CD8-positive, alpha-beta T cell (primary cell): ENCODE measurements at regions of chr13 and their contacts with region 1.

Region 1: DNA sequence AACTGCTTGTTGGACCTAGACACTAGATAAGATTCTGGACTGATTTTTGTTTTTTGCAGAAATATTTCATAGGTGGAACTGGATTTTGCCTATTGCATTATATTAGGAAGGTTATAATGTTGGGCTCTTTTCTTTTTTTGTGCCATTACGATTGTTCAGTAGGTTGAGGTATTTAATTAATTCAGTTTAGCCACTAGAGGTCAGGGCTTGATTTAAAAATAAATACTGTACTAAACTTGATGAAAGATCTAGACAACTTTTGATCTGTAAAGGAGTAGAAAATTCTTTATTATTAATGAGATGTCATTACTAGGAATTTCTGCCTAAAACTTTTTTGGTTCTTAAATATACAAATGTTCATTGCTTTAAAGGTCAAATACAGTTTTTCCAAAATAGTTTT is 15.2 kb upstream of the SUPT20H start:
- DNase-seq: peak in 1 of 9 experiments; percentile 33
- ATAC-seq: no peak
- H3K4me3 ChIP-seq: no peak overlapping the region
- H3K4me3 Mint-ChIP-seq: no peak overlapping the region
- H3K27ac ChIP-seq: no peak overlapping the region
- H3K27ac Mint-ChIP-seq: no peak overlapping the region
- H3K4me1 ChIP-seq: no peaks in the 10 kb centered on the region
- H3K4me1 Mint-ChIP-seq: peaks cover 2% of the 10 kb centered on the region
- H3K27me3 ChIP-seq: no peaks in the 10 kb centered on the region
- H3K27me3 Mint-ChIP-seq: peaks cover 3% of the 10 kb centered on the region
- CTCF ChIP-seq: peak; percentile 49

Region 2: GRCh38 chr13:36766314-36766713 is 308.4 kb before region 1 on chr13:
- CTCF ChIA-PET with region 1: no interaction called
- POLR2A ChIA-PET with region 1: no interaction called
- intact Hi-C with region 1: no loop called
- DNase-seq: no peak
- ATAC-seq: no peak
- H3K4me3 ChIP-seq: no peak overlapping the region
- H3K4me3 Mint-ChIP-seq: no peak overlapping the region
- H3K27ac ChIP-seq: no peak overlapping the region
- H3K27ac Mint-ChIP-seq: no peak overlapping the region
- H3K4me1 ChIP-seq: no peaks in the 10 kb centered on the region
- H3K4me1 Mint-ChIP-seq: no peaks in the 10 kb centered on the region
- H3K27me3 ChIP-seq: no peaks in the 10 kb centered on the region
- H3K27me3 Mint-ChIP-seq: peaks cover 16% of the 10 kb centered on the region
- CTCF ChIP-seq: no peak

Region 3: DNA sequence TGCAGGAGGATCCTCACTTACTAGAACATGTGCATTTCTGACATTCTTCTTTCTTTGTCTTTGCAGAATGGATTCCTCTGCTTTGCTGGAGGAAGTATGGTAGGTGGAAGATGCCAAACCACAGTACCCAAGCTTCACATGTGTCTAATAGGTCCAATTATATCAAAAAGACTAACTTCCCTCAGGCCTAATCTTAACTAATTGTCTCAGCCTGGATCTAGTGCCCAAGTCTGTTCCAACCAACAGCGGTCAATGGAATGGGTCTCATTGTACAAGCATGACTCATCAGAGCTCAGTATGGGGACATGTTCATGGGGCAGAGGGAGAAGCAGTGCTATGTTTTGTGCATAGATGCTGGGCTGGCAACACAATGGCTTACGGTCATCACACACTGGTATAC is 112.4 kb after region 1 on chr13:
- CTCF ChIA-PET with region 1: no interaction called
- POLR2A ChIA-PET with region 1: no interaction called
- intact Hi-C with region 1: no loop called
- DNase-seq: no peak
- ATAC-seq: no peak
- H3K4me3 ChIP-seq: no peak overlapping the region
- H3K4me3 Mint-ChIP-seq: no peak overlapping the region
- H3K27ac ChIP-seq: no peak overlapping the region
- H3K27ac Mint-ChIP-seq: no peak overlapping the region
- H3K4me1 ChIP-seq: no peaks in the 10 kb centered on the region
- H3K4me1 Mint-ChIP-seq: no peaks in the 10 kb centered on the region
- H3K27me3 ChIP-seq: peaks cover 0 to 3% of the 10 kb centered on the region in 2 experiments
- H3K27me3 Mint-ChIP-seq: no peaks in the 10 kb centered on the region
- CTCF ChIP-seq: no peak

Region 4: GRCh38 chr13:38582133-38582532 is 1507.4 kb after region 1 on chr13:
- CTCF ChIA-PET with region 1: interaction called, 3 read pairs
- POLR2A ChIA-PET with region 1: no interaction called
- intact Hi-C with region 1: loop called (anchors 2 to 5 kb)
- DNase-seq: peak in 2 of 9 experiments; percentile 2 to 20
- ATAC-seq: no peak
- H3K4me3 ChIP-seq: no peak overlapping the region
- H3K4me3 Mint-ChIP-seq: no peak overlapping the region
- H3K27ac ChIP-seq: no peak overlapping the region
- H3K27ac Mint-ChIP-seq: no peak overlapping the region
- H3K4me1 ChIP-seq: no peaks in the 10 kb centered on the region
- H3K4me1 Mint-ChIP-seq: no peaks in the 10 kb centered on the region
- H3K27me3 ChIP-seq: no peaks in the 10 kb centered on the region
- H3K27me3 Mint-ChIP-seq: no peaks in the 10 kb centered on the region
- CTCF ChIP-seq: no peak

Region 5: DNA sequence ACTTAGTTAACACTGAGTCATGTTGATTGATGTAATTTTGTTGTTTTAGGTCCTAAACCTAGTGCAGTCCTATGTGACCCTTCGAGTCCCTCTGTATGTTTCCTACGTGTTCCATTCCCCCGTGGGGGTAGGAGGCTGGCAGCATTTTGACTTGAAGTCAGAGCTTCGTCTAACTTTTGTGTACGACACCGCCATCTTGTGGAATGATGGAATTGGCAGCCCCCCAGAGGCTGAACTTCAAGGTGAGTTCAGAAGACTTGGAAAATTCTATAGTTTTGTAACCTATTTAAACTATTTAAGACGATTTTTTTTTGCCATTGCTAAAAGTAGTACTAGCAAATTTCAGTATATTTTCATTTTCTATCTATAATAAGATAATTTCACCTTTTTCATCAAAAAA is 1798.0 kb after region 1 on chr13:
- CTCF ChIA-PET with region 1: no interaction called
- POLR2A ChIA-PET with region 1: no interaction called
- intact Hi-C with region 1: loop called (anchors 2 to 10 kb)
- DNase-seq: peak in 5 of 9 experiments; percentile 24 to 48 (median 29)
- ATAC-seq: no peak
- H3K4me3 ChIP-seq: no peak overlapping the region
- H3K4me3 Mint-ChIP-seq: no peak overlapping the region
- H3K27ac ChIP-seq: no peak overlapping the region
- H3K27ac Mint-ChIP-seq: no peak overlapping the region
- H3K4me1 ChIP-seq: no peaks in the 10 kb centered on the region
- H3K4me1 Mint-ChIP-seq: peaks cover 2% of the 10 kb centered on the region
- H3K27me3 ChIP-seq: no peaks in the 10 kb centered on the region
- H3K27me3 Mint-ChIP-seq: peaks cover 2% of the 10 kb centered on the region
- CTCF ChIP-seq: peak; percentile 38

Region 6: GRCh38 chr13:38914070-38914469 is 1839.4 kb after region 1 on chr13:
- CTCF ChIA-PET with region 1: no interaction called
- POLR2A ChIA-PET with region 1: no interaction called
- intact Hi-C with region 1: loop called in 1 of 2 experiments (anchors 5 kb)
- DNase-seq: no peak
- ATAC-seq: no peak
- H3K4me3 ChIP-seq: no peak overlapping the region
- H3K4me3 Mint-ChIP-seq: no peak overlapping the region
- H3K27ac ChIP-seq: no peak overlapping the region
- H3K27ac Mint-ChIP-seq: no peak overlapping the region
- H3K4me1 ChIP-seq: no peaks in the 10 kb centered on the region
- H3K4me1 Mint-ChIP-seq: no peaks in the 10 kb centered on the region
- H3K27me3 ChIP-seq: no peaks in the 10 kb centered on the region
- H3K27me3 Mint-ChIP-seq: peaks cover 5% of the 10 kb centered on the region
- CTCF ChIP-seq: no peak